Cardiac septum (tissue), 1 donor: ENCODE measurements at regions of chr10 and their contacts with region 1.

Region 1: DNA sequence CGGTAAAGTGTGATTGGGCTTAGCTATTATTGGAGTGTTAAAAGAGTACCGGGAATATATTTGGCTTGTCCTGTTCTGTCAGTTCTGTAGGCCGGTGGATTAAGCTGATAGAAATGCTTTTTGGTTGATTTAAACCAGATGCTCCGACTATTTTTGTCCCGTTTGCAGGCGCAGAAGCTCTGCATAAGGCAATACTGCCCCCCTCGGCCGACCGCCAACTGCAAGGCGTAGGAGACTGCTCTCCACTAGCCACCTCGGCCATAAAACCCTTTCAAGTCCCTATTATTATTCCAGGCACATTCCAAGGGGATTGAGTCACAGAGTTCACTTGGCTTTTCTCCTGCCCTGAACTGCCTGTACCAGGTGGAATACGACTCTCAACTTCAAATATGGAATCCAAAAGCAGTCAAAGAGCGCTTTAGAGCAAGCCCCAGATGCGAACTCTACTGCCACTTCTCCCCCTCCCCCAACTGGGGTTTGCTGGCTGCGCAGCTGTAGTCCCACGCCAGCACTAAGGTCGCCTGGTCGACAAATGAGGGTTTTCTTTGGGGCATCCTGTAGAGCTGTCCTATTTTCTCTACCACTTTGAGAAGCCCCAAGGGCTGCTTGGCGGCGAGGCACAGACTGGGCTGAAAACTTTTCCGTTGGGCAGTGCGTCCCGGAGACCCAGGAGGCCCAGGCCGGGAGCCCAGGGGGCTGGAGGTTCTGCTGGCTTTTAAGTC is 108.3 kb downstream of the REEP3 start:
- DNase-seq: peak; percentile 96

Region 2: GRCh38 chr10:63166742-63167258 is 462.7 kb before region 1 on chr10:
- intact Hi-C with region 1: loop called (anchors 2 kb)
- DNase-seq: no peak

Region 3: GRCh38 chr10:63217120-63217605 is 412.4 kb before region 1 on chr10:
- intact Hi-C with region 1: loop called (anchors 2 kb)
- DNase-seq: no peak

Region 4: DNA sequence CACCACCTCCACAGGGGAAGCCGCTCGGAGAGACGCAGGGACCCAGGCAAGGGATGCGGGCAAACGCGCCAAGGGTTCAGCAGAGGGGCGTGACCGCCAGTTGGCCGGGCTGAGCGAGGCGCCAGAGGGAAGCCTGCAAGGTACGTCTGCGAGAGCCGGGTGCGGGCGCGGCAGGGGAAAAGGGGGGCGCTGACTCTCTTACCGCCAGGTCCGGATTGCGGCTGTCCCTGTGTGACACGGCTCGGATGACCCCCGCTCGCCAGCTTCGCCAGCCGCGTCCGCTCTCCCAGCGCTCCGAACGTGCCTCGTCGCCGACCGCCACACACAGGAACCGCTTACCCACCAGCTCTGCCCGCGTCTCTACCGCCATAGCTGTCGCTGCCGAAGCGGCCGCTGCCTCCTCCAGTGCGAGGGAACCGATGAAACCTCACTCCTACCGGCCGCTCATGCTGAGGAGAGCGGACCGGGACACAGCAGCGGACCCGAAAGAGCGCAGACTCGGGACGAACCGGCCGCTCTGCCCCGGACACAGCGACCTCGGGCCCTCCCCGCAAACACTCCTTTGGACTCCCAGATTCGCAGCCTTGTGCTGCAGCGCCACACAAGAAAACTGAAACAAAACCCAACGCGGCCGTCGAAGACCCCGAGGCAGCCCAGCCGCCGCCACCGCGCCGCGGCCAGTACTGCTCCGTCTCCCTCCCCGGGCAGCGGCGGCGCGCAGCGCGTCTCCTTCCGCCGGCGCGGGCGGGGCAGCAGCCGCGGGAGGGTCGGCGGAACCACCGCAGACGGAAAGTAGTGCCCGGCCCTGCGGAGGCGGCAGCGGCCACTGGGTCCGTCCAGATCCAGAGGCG is 164.0 kb before region 1 on chr10 and contains the start of gene JMJD1C:
- intact Hi-C with region 1: loop called (anchors 1 kb)
- DNase-seq: peak; percentile 90
- total RNA-seq, gene JMJD1C: 41.3 TPM

Region 5: GRCh38 chr10:63666836-63667383 is 37.4 kb after region 1 on chr10:
- intact Hi-C with region 1: loop called (anchors 5 kb)
- DNase-seq: no peak

Region 6: GRCh38 chr10:63798599-63799498 is 169.3 kb after region 1 on chr10:
- intact Hi-C with region 1: loop called (anchors 2 kb)
- DNase-seq: peak; percentile 78